Psoas muscle (tissue), 8 donors: ENCODE measurements at regions of chr7 and their contacts with region 1.

Region 1: GRCh38 chr7:13742811-13743210 is 246.7 kb downstream of the ETV1 start:
- DNase-seq: no peak
- ATAC-seq: peak in 2 of 4 donors; percentile 60 to 85
- H3K4me3 ChIP-seq: no peak overlapping the region
- H3K27ac ChIP-seq: no peak overlapping the region
- H3K4me1 ChIP-seq: peaks cover 16% of the 10 kb centered on the region
- H3K27me3 ChIP-seq: no peaks in the 10 kb centered on the region
- CTCF ChIP-seq: peak; percentile 55

Region 2: DNA sequence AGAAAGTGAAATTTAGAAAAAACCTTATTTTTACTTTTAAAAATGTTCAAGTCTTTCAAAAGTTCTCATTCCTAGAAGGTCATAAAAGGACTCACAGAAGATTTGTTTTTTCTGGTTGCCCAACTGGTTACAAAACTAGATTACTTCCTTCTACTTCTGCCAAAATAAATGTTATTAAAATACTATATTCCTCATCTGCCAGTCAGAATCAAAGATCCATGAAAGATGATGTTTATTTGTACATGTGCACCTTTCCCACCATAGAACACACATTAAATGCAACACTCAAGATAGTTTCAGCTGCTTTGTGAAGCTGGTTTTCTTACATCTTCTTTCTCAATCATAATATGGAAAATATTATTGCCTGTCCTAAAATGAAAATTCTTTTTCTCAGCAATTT is 218.7 kb before region 1 on chr7:
- intact Hi-C with region 1: loop called in 1 of 2 experiments (anchors 10 kb)
- DNase-seq: no peak
- ATAC-seq: no peak
- H3K4me3 ChIP-seq: no peak overlapping the region
- H3K27ac ChIP-seq: no peak overlapping the region
- H3K4me1 ChIP-seq: no peaks in the 10 kb centered on the region
- H3K27me3 ChIP-seq: no peaks in the 10 kb centered on the region
- CTCF ChIP-seq: no peak